Aorta (tissue), 5 donors: ENCODE measurements at regions of chr16 and their contacts with region 1.

Region 1: DNA sequence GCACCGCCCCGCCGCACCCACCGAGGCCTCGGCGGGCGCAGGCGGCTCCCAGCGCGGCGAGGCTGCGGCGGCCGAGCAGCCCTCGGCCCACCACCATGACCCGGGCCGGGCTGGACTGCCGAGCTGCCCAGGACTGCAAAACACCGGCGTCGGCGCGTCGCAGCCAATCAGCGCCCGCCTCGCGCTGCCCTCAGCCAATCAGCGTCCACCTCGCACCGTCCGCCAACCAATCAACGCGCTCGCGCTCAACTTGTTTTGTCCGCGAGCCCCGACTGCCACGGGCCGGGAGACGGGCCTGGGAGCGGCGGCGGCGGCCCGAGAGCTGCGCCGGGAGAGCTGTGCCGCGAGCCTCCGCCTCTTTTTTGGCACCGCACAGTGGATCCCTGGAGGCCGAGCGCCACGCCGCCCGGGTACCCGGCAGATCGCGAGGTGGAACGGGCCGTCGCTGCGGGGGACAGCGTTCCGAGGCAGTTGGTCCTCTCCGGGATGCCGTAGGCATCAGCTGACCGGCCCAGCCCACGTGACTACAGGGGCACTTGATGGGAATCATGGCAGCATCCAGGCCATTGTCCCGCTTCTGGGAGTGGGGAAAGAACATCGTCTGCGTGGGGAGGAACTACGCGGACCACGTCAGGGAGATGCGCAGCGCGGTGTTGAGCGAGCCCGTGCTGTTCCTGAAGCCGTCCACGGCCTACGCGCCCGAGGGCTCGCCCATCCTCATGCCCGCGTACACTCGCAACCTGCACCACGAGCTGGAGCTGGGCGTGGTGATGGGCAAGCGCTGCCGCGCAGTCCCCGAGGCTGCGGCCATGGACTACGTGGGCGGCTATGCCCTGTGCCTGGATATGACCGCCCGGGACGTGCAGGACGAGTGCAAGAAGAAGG is at the starts of genes FAHD1 and HAGH:
- DNase-seq: peak; percentile 95 to 98
- ATAC-seq: peak; percentile 97
- H3K4me3 ChIP-seq: peak within 1 kb of the TSS; percentile 77 to 83
- H3K27ac ChIP-seq: peak within 1 kb of the TSS in 1 of 2 donors; percentile 44
- H3K4me1 ChIP-seq: no peaks in the 10 kb centered on the region
- H3K27me3 ChIP-seq: no peaks in the 10 kb centered on the region
- total RNA-seq, gene FAHD1: 7.4 to 11.9 TPM
- total RNA-seq, gene HAGH: 50.2 to 52.3 TPM

Region 2: DNA sequence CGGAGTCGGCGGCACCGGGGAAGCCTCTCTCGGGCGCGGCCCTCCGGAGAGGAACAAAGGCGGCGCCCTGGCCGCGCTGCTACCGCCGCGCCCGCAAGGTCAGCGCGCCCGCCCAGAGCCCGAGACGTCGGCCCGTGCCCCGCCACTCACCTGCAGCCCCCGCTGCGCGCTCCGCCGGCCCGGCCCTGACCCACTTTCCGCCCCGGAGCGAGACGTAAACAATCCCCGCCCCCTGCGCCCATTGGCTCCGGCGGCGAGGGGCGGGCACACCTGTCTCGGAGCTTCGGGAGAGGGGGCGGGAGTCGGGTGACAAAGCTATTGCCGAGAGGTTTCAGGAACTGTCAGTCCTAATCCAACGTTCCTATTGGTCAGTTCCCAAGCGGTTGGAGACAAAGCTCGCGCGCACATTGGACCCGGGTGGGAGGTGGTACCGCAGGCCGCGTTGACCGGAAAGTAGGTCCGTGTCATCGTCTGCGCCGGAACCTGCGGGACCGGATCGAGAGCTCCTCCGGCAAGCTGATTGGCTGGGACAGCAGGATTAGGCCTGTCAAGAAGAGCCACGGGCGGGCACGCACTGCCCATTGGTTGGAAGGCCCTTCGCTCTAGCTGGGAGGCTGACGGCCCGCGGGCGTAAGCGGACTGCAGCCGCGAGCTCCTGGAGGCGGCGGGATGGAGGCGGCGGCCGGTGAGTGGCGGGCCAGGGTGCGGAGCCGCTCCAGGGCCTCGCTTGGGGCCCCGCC is 44.4 kb before region 1 on chr16 and contains the starts of genes NUBP2 and SPSB3:
- intact Hi-C with region 1: loop called in 1 of 2 experiments (anchors 5 kb)
- DNase-seq: peak; percentile 100
- ATAC-seq: peak; percentile 96
- H3K4me3 ChIP-seq: peak within 1 kb of the TSS; percentile 77 to 81
- H3K27ac ChIP-seq: peak within 1 kb of the TSS in 1 of 2 donors; percentile 53
- H3K4me1 ChIP-seq: no peaks in the 10 kb centered on the region
- H3K27me3 ChIP-seq: no peaks in the 10 kb centered on the region
- total RNA-seq, gene NUBP2: 30.7 to 32.9 TPM
- total RNA-seq, gene SPSB3: 33.6 to 33.7 TPM

Region 3: GRCh38 chr16:1812732-1813163 is 14.2 kb before region 1 on chr16:
- intact Hi-C with region 1: no loop called
- DNase-seq: no peak
- ATAC-seq: peak; percentile 58
- H3K4me3 ChIP-seq: no peak overlapping the region
- H3K27ac ChIP-seq: no peak overlapping the region
- H3K4me1 ChIP-seq: no peaks in the 10 kb centered on the region
- H3K27me3 ChIP-seq: no peaks in the 10 kb centered on the region